ENCODE measurements at regions of chr2 and their contacts with region 1.

Region 1: GRCh38 chr2:178761759-178762371 is 45.4 kb downstream of the TTN start:
- DNase-seq: peak; percentile 12
- ATAC-seq: peak; percentile 83
- H3K4me3 ChIP-seq: no peak overlapping the region
- H3K27ac ChIP-seq: no peak overlapping the region
- H3K4me1 ChIP-seq: no peaks in the 10 kb centered on the region
- H3K27me3 ChIP-seq: no peaks in the 10 kb centered on the region
- CTCF ChIP-seq: peak; percentile 68 to 79 (median 69)
- EP300 ChIP-seq: no peak
- POLR2A ChIP-seq: no peak
- RAD21 ChIP-seq: peak; percentile 91

Region 2: GRCh38 chr2:178776751-178777150 is 14.9 kb after region 1 on chr2:
- CTCF ChIA-PET with region 1: interaction called, 21 read pairs
- POLR2A ChIA-PET with region 1: no interaction called
- RAD21 ChIA-PET with region 1: interaction called, 4 read pairs
- SMC1A ChIA-PET with region 1: interaction called, 9 read pairs
- in situ Hi-C with region 1: no loop called
- intact Hi-C with region 1: no loop called
- DNase-seq: no peak
- ATAC-seq: no peak
- H3K4me3 ChIP-seq: no peak overlapping the region
- H3K27ac ChIP-seq: no peak overlapping the region
- H3K4me1 ChIP-seq: no peaks in the 10 kb centered on the region
- H3K27me3 ChIP-seq: no peaks in the 10 kb centered on the region
- CTCF ChIP-seq: no peak
- EP300 ChIP-seq: no peak
- POLR2A ChIP-seq: no peak
- RAD21 ChIP-seq: no peak

Region 3: GRCh38 chr2:178891265-178891958 is 129.5 kb after region 1 on chr2:
- CTCF ChIA-PET with region 1: interaction called, 10 read pairs
- POLR2A ChIA-PET with region 1: no interaction called
- RAD21 ChIA-PET with region 1: interaction called, 4 read pairs
- SMC1A ChIA-PET with region 1: no interaction called
- in situ Hi-C with region 1: no loop called
- intact Hi-C with region 1: no loop called
- DNase-seq: peak; percentile 33
- ATAC-seq: peak; percentile 94
- H3K4me3 ChIP-seq: no peak overlapping the region
- H3K27ac ChIP-seq: no peak overlapping the region
- H3K4me1 ChIP-seq: no peaks in the 10 kb centered on the region
- H3K27me3 ChIP-seq: no peaks in the 10 kb centered on the region
- CTCF ChIP-seq: peak; percentile 87 to 91 (median 90)
- EP300 ChIP-seq: no peak
- POLR2A ChIP-seq: no peak
- RAD21 ChIP-seq: peak; percentile 89

Region 4: DNA sequence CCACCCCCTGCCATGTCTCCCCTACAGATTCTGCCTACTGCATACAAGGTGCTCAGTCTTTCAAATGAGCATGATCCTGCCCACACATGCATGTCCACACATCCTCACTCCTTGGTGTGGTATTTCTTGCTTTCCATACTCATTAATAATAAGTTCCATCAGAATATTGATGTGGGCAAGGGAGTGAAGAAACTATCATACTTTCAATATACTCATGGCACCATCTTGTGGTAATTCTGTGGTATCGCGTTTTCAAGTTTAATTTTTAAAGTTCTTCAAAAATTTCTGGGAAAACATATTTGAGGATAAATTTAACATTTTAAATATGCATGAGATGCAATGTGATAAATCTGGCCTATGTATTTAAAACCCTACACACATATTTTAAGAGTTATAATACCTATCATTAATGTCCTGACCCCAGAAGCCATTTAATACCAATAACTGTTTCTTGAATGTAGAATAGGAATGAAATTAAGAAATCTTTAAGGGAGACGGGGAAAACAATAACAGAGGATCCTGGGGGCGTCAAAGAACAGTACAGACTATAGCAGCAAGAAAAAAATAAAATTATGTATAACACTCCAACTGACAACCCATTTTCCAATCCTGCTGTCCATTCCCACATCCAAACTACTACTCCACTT is 989.4 kb after region 1 on chr2:
- CTCF ChIA-PET with region 1: interaction called, 5 read pairs
- POLR2A ChIA-PET with region 1: no interaction called
- RAD21 ChIA-PET with region 1: no interaction called
- SMC1A ChIA-PET with region 1: no interaction called
- in situ Hi-C with region 1: loop called (anchors 25 kb)
- intact Hi-C with region 1: loop called (anchors 2 kb)
- DNase-seq: no peak
- ATAC-seq: peak; percentile 50
- H3K4me3 ChIP-seq: no peak overlapping the region
- H3K27ac ChIP-seq: no peak overlapping the region
- H3K4me1 ChIP-seq: no peaks in the 10 kb centered on the region
- H3K27me3 ChIP-seq: no peaks in the 10 kb centered on the region
- CTCF ChIP-seq: peak; percentile 42 to 66 (median 57); a peak in 5 of 6 replicates
- EP300 ChIP-seq: no peak
- POLR2A ChIP-seq: no peak
- RAD21 ChIP-seq: peak; percentile 78

Measured in GM12878 (cell line).